Cardiac septum (tissue), 1 donor: ENCODE measurements at regions of chr10 and their contacts with region 1.

Region 1: GRCh38 chr10:119028900-119029612 is 458 bp upstream of the NANOS1 start:
- DNase-seq: peak; percentile 92

Region 2: GRCh38 chr10:118754720-118755480 is 274.2 kb before region 1 on chr10 and contains the start of gene CACUL1:
- intact Hi-C with region 1: loop called (anchors 5 kb)
- DNase-seq: peak; percentile 100
- total RNA-seq, gene CACUL1: 31.6 TPM

Region 3: GRCh38 chr10:118850418-118851061 is 178.5 kb before region 1 on chr10:
- intact Hi-C with region 1: loop called (anchors 10 kb)
- DNase-seq: no peak

Region 4: DNA sequence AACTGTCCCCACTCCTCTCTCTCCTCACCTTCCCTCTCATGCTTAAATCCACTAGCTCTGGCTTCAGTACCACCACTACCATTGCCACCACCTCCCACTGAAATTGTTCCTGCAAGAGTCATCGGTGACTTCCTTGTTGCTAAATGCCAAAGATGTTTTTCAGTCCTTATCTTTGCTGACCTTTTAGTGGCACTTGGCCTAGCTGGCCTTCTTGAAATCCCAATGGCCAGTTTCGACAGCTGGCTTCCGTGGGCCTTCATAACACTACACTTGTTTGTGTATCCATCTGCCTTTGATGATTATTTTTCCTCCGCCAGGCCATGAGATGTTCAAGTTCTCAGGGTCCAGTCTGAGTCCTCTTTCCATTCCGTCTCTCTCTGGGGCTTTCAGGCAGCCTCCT is 117.7 kb before region 1 on chr10:
- intact Hi-C with region 1: loop called (anchors 5 kb)
- DNase-seq: no peak

Region 5: GRCh38 chr10:118958984-118959916 is 69.8 kb before region 1 on chr10:
- intact Hi-C with region 1: loop called (anchors 2 kb)
- DNase-seq: peak; percentile 78

Region 6: DNA sequence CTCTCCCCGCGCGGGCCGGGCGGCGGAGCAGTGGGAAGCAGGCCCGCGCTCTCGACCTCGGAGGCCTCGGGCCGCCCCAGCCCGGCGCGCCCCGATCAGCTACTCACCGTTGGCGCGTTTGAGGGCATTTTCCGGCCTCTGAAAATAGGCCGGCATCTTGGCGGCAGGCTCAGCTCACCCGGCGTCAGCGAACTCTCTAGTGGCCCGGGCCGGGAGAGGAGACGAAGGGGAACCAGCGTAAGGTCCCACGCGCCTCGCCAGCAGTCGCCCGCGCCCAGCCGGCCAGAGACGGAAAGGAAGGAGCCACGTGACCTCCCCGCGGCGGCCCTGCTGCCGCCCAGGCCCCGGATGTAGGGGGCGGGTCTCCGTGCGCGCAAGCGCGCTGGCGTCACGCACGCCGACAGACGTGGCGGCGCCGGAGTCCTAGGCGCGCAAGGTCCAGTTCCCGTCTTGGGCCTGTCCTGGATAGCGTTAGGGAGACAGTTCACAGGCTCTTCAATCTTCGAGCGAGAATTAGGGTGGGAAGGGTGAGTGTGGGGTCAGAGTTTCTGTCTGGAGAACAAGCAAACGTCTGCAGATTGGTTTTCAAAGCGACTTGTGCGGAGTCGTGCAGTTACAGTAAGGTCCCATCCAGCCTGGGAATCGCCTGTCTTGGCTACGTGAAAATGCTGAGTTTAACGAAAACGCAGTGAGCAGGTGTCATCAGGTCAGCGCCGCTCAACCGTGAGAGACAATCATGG is 51.6 kb after region 1 on chr10 and contains the start of gene EIF3A:
- intact Hi-C with region 1: loop called (anchors 5 kb)
- DNase-seq: peak; percentile 98
- total RNA-seq, gene EIF3A: 133 TPM

Region 7: GRCh38 chr10:119090968-119091367 is 61.9 kb after region 1 on chr10:
- intact Hi-C with region 1: no loop called
- DNase-seq: no peak